ENCODE measurements at regions of chr4 and their contacts with region 1.

Region 1: GRCh38 chr4:70629469-70630090 is 1.0 kb downstream of the ENAM start:
- DNase-seq: no peak
- ATAC-seq: no peak; the same call in 1 of the 2 replicates
- H3K4me3 ChIP-seq: no peak overlapping the region
- H3K27ac ChIP-seq: no peak overlapping the region
- H3K4me1 ChIP-seq: no peaks in the 10 kb centered on the region
- H3K27me3 ChIP-seq: no peaks in the 10 kb centered on the region
- CTCF ChIP-seq: no peak
- POLR2A ChIP-seq: no peak
- RAD21 ChIP-seq: no peak

Region 2: DNA sequence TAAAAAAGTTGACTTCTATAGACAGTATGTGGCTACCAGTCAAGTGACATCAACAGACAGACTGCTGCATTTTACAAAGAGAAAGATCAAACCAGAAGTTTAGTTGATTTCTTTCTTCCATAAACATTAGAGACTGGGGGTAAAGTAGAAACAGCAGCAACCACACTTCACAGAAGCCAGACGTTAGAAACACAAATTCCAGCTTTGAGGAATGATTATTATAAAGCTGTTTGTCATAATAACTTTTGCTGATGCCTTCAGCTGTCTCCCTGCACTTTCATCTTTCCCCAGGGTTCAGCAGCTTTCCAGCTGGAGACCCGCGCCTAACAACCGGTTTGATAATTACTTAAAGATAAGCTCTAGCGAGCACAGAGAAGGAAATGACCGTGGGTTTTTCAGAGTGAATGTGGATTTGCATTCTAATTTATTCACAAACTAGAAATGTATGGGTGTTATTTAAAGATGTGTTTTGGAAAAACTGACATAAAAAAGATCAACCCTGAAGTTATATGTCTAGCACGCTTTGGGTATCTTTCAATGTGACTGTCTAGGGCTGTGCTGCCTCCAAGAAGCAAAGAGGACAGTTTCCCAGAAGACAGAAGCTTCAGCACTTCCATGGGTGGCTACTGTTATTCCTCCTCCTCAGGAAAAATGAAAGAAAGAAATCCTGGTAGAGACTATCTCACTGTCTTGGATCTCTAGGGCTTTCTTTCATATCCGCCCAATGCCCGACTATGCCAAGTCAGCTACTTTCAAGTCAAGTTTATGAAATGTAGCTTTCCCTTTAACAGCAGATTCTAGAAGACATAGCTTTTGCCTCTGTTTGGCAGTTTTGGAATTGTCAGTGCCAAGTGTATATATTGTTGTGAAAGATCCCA is 16.0 kb before region 1 on chr4:
- CTCF ChIA-PET with region 1: interaction called, 3 read pairs
- POLR2A ChIA-PET with region 1: no interaction called
- dilution Hi-C with region 1: no loop called
- in situ Hi-C with region 1: no loop called
- intact Hi-C with region 1: loop called (anchors 1 kb)
- DNase-seq: no peak
- ATAC-seq: peak; percentile 80
- H3K4me3 ChIP-seq: peak overlapping the region; percentile 44; the same call in 1 of the 2 replicates
- H3K27ac ChIP-seq: no peak overlapping the region
- H3K4me1 ChIP-seq: no peaks in the 10 kb centered on the region
- H3K27me3 ChIP-seq: peaks cover 2% of the 10 kb centered on the region; the same call in 1 of the 2 replicates
- CTCF ChIP-seq: no peak
- POLR2A ChIP-seq: no peak
- RAD21 ChIP-seq: no peak